Activated T-helper 2 cell treated with anti-CD3 and anti-CD28 coated beads, Interferon-gamma antibody, Interleukin-2, Interleukin-4, amounts not matched to agents 10 μg/mL and 5 μg/mL and 100 μg/mL, durations not matched to agents 14 hours and 24 hours and 36 hours (primary cell): ENCODE measurements at regions of chr10 and their contacts with region 1.

Region 1: DNA sequence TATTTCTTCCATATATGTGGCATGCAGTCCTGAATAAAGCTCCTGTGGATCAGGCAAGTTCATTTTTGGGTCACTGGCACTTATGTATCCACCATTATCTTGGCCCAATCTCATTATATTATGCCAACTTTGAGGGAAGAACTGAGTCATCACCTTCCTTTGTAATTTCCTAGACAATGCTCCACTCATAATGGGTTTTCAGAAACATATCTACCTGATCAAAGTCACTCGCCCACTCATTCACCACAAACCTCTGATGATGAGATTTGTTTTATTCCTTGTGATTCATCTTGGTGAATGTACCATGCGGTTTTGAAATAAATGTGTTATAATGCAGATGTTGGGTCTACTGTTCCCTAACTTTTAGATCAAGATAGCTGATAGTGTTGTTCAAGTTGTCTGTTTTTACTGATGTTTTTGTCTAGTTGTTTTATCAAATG is 525.8 kb downstream of the KIF20B start:
- DNase-seq: peak; percentile 10
- H3K4me3 Mint-ChIP-seq: no peak overlapping the region
- H3K27ac Mint-ChIP-seq: peak overlapping the region; percentile 12
- H3K4me1 Mint-ChIP-seq: peaks cover 8% of the 10 kb centered on the region
- H3K27me3 Mint-ChIP-seq: peaks cover 17% of the 10 kb centered on the region

Region 2: GRCh38 chr10:89251409-89252224 is 975.6 kb before region 1 on chr10 and contains the start of gene LIPA:
- intact Hi-C with region 1: loop called (anchors 5 kb)
- DNase-seq: peak; percentile 90
- H3K4me3 Mint-ChIP-seq: peak within 1 kb of the TSS; percentile 79
- H3K27ac Mint-ChIP-seq: no peak within 1 kb of the TSS
- H3K4me1 Mint-ChIP-seq: peaks cover 23% of the 10 kb centered on the region
- H3K27me3 Mint-ChIP-seq: peaks cover 10% of the 10 kb centered on the region
- total RNA-seq, gene LIPA: 12.9 and 13.6 TPM in 2 replicates

Region 3: DNA sequence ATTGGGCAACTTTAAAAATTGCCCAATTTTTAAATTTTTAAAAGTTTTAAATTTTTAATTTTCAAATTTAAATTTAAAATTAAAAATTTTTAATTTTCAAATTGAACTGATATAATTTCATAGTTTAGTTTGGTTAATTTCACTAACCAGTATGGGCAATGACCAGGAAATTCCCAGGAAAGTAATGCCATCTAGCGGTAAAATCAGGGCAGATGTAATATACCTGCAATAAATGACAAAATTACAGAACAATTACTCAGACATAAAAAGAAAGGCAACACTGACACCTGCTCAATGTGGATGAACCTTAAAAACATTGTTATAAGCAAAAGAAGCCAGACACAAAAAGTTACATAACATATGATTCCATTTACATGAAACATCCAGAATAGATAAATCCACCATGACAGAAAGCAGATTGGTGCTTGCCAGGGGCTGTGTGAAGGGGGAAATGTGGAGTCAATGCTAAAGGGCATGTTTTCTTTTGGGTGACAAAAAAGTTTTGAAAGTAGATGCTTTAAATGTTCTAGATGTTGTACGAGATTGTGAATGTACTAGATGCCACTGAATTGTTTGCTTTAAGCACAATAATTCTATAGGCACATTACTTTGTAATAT is 663.3 kb before region 1 on chr10:
- intact Hi-C with region 1: no loop called
- DNase-seq: no peak
- H3K4me3 Mint-ChIP-seq: no peak overlapping the region
- H3K27ac Mint-ChIP-seq: no peak overlapping the region
- H3K4me1 Mint-ChIP-seq: peaks cover 2% of the 10 kb centered on the region
- H3K27me3 Mint-ChIP-seq: peaks cover 36% of the 10 kb centered on the region

Region 4: GRCh38 chr10:89805599-89806013 is 421.6 kb before region 1 on chr10:
- intact Hi-C with region 1: loop called (anchors 1 kb)
- DNase-seq: no peak
- H3K4me3 Mint-ChIP-seq: no peak overlapping the region
- H3K27ac Mint-ChIP-seq: peak overlapping the region; percentile 14
- H3K4me1 Mint-ChIP-seq: peaks cover 19% of the 10 kb centered on the region
- H3K27me3 Mint-ChIP-seq: peaks cover 40% of the 10 kb centered on the region

Region 5: GRCh38 chr10:89861584-89862301 is 365.5 kb before region 1 on chr10:
- intact Hi-C with region 1: loop called (anchors 2 kb)
- DNase-seq: no peak
- H3K4me3 Mint-ChIP-seq: no peak overlapping the region
- H3K27ac Mint-ChIP-seq: peak overlapping the region; percentile 47
- H3K4me1 Mint-ChIP-seq: peaks cover 16% of the 10 kb centered on the region
- H3K27me3 Mint-ChIP-seq: peaks cover 12% of the 10 kb centered on the region

Region 6: DNA sequence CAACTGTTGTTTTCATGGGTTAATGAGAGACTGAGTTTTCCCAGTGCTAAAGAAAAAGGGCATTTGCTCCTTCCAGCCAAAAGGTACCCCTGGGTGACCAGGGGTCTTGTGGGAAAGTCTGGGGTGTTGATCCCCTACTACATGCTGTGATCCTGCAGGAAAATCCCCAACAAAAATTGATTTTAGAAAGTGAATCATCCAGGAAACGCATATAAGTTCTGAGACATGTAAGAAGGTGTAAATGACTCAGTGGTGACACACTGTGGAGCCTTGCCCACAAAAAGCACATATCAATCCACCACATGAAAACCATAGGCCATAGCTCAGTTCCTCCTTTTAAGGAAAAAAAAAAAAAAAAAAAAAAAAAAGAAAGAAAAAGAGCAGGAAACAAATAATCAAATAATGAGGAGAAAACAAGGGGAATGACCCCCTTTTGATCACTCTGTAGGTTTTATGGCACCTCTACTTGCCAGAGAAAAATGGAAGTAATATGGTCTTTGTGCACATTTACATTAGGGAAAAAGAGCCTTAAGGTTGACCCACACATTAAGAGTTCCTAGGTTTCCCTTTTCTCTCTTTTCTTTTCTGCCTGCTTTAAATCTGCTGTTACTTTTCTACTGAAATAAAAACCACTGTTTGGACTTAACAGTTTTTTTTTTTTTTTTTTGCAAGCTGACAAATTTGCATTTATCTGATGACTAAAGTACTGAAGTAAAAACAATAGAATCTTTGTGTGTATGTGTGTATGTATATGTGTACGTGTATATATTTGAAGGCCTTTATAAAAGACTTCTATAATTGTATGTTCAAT is 139.8 kb before region 1 on chr10:
- intact Hi-C with region 1: loop called (anchors 1 kb)
- DNase-seq: no peak
- H3K4me3 Mint-ChIP-seq: no peak overlapping the region
- H3K27ac Mint-ChIP-seq: no peak overlapping the region
- H3K4me1 Mint-ChIP-seq: peaks cover 9% of the 10 kb centered on the region
- H3K27me3 Mint-ChIP-seq: peaks cover under 1% of the 10 kb centered on the region